Right cardiac atrium (tissue), 5 donors: ENCODE measurements at regions of chr18 and their contacts with region 1.

Region 1: GRCh38 chr18:8870528-8870927 is 165.2 kb downstream of the MTCL1 start:
- DNase-seq: no peak
- ATAC-seq: no peak
- H3K4me3 ChIP-seq: no peak overlapping the region
- H3K27ac ChIP-seq: no peak overlapping the region
- H3K4me1 ChIP-seq: no peaks in the 10 kb centered on the region
- H3K27me3 ChIP-seq: no peaks in the 10 kb centered on the region

Region 2: DNA sequence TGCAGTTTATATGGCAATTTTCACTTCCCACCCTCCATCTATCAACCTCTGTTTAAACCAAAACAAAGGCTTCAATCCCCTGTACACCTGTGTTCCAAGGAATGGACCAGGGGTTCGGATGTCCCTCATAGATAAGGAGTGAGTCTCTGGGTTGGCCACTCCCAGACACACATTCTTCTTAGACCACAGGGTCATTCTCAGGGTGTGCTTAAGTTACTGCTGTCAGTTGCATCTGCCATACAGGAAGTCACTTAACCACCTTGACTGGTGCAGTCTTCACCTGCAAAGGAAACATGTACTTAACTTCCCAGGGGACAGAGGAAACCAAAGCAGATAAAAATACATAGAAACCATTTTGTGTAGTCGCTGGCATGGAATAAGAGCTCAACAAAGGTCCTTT is 81.0 kb after region 1 on chr18:
- intact Hi-C with region 1: loop called in 1 of 4 experiments (anchors 10 kb)
- DNase-seq: no peak
- ATAC-seq: no peak
- H3K4me3 ChIP-seq: no peak overlapping the region
- H3K27ac ChIP-seq: no peak overlapping the region
- H3K4me1 ChIP-seq: no peaks in the 10 kb centered on the region
- H3K27me3 ChIP-seq: no peaks in the 10 kb centered on the region